ENCODE measurements at regions of chr17 and their contacts with region 1.

Region 1: DNA sequence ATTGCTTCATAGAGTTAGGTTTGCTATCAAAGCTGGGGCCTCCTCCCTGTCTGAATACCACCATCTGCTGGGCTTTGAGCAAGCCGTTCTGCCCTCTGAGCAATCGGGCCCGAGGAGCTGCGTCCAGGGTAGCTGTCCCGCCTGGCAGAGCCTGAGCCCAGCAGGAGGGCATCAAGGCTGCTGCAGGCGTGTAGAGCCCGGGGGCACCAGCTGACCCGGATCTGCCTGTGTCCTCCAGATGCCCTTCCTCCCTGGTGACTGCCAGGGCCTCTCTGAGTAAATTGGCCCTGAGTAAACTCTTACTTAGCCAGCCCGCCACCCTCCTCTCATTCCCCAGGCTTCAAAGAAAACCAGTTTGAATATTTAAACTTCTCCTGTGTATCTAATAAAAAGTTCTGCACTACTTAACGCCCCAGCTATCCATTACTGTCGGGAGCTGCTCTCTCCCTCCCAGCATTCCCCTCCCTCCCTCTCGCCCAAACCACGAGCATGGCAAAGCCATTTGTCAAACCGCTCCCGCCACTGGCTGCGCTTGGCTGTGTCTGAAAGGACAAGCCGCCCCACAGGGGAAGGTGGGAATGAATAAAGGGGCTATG is 16.4 kb downstream of the CDK5RAP3 start:
- DNase-seq: peak in 1 of 2 experiments; percentile 60
- H3K4me3 ChIP-seq: peak overlapping the region in 2 of 4 experiments; percentile 12 to 19; a peak in 1 of 8 replicates
- H3K27ac ChIP-seq: no peak overlapping the region
- H3K4me1 ChIP-seq: peaks cover 14 to 22% (median 18%) of the 10 kb centered on the region in 4 experiments
- H3K27me3 ChIP-seq: no peaks in the 10 kb centered on the region
- CTCF ChIP-seq: no peak
- EP300 ChIP-seq: no peak
- POLR2A ChIP-seq: no peak
- RAD21 ChIP-seq: no peak

Region 2: DNA sequence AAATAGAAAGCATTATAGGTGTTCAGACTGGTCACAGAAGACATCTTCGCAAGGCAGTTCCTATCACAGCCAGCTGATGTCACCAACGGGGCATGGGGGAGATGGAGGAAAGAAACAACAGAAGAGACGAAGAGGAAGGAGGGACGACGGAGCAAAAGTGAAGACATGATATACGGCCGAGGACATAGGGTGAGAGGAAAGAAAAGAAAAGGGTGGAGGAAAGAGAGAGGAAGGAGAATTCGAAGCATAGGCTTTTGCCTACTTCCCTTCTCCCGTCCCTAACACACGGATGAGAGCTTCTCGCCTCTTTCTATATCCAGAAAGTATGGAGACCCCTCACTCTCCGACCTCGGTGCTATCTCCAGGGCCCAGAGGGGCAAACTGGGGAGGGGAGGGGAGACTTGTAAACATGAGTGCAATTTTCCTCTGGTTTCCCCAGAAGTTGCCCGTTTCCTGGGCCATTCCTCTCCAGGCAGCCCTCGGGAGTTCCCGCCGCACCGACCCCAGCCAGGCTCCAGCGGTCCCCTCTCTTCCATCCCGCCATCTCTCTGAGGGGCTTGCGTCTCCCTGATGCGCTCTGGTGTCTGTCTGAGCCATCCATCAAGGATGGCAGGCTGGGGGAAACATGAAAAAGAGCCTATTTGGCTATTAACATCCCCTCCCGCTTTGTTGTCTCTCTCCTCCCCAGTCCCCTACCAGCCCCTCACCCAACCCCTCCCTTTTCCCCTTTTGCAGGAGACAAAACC is 24.2 kb after region 1 on chr17:
- CTCF ChIA-PET with region 1: interaction called, 698 read pairs
- POLR2A ChIA-PET with region 1: interaction called, 17 read pairs
- DNase-seq: peak in 1 of 2 experiments; percentile 72
- H3K4me3 ChIP-seq: peak overlapping the region; percentile 61 to 75 (median 66)
- H3K27ac ChIP-seq: no peak overlapping the region
- H3K4me1 ChIP-seq: peaks cover 4 to 14% (median 9%) of the 10 kb centered on the region in 4 experiments
- H3K27me3 ChIP-seq: peaks cover 0 to 13% (median 8%) of the 10 kb centered on the region in 4 experiments; a peak in 6 of 7 replicates
- CTCF ChIP-seq: peak; percentile 40 to 66 (median 63)
- EP300 ChIP-seq: no peak
- POLR2A ChIP-seq: no peak
- RAD21 ChIP-seq: peak; percentile 45 to 60; a peak in 3 of 4 replicates